H1 (cell line): ENCODE measurements at regions of chr7 and their contacts with region 1.

Region 1: DNA sequence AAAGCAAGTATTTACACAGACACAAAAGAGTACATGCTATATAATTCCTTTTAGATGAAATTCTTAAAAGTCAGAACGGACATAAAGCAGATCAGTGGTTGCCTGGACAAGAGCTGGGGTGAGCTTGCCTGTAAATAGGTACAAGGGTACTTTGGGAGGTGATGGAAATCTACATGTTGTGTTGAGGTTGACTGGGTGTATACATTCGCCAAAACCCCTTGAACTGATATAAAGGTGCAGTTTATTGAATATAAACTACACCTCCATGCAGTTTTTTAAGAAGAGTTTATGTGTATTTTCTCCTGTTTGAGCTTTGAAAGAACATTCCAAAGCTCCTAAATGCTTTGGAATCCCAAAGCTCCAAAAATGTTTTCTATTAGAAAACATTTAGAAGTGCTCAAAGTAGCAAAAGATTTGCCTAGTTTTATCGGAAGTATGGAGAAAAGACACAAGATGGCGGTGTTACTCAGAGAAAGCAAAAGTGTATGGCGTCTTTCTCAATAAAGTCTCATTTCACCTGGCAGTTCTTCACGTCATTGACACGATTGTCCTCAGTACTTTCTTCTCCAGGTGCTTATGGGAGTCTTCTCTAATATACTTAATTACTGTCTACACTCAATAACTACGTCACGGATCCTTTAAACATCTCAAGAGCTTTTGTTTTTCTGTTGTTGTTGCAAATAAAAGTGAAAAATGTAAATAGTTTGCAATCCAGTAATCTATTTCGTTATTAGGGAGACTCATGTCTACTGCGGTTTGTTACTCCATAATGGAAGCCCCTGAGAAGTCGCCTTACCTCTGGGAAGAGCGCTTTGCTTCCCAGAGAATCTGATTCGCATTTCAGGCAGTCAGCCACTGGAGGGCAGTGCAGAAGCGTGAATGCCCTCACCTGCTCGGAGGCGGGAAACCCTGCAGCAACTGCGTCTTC is 14.7 kb upstream of the SEC61G start:
- DNase-seq: peak; percentile 81 to 91
- H3K4me3 ChIP-seq: peak overlapping the region in 1 of 4 experiments; percentile 7; a peak in 1 of 8 replicates
- H3K27ac ChIP-seq: no peak overlapping the region
- H3K4me1 ChIP-seq: no peaks in the 10 kb centered on the region
- H3K27me3 ChIP-seq: no peaks in the 10 kb centered on the region
- CTCF ChIP-seq: peak; percentile 85 to 94 (median 89)
- EP300 ChIP-seq: no peak
- POLR2A ChIP-seq: no peak
- RAD21 ChIP-seq: peak; percentile 97 to 98

Region 2: DNA sequence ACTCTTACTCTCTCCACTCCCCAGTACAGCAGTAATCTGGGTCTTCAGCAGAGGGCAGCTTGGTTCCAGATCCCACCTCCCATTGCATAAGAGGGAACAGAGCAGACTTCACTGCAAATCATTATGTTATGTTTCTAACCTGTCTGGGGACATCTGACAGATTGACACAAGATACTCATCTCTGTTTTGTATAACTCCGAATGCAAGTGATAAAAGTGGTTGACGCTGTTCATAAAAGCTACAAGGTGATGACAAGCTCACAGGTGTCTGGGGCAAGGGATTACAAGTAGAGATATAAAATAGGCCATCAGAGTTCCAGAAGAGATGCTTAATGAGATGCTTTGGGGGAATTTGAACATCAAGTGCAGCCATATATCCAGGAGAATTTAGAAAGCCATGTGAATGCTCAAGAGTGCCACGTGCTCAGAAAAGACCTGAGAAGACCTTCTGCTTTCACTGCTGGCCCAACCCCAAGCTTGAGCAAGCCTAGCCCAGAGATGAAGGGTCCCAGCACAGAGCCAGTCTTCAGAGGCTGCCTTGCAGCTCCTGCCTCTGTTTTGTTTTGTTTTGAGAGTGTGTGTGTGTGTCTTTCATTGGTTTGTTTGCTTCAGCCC is 150.9 kb before region 1 on chr7:
- CTCF ChIA-PET with region 1: no interaction called
- POLR2A ChIA-PET with region 1: no interaction called
- DNase-seq: no peak
- H3K4me3 ChIP-seq: no peak overlapping the region
- H3K27ac ChIP-seq: no peak overlapping the region
- H3K4me1 ChIP-seq: no peaks in the 10 kb centered on the region
- H3K27me3 ChIP-seq: no peaks in the 10 kb centered on the region
- CTCF ChIP-seq: no peak
- EP300 ChIP-seq: no peak
- POLR2A ChIP-seq: no peak
- RAD21 ChIP-seq: peak in 1 of 2 experiments; percentile 12; a peak in 2 of 4 replicates

Region 3: DNA sequence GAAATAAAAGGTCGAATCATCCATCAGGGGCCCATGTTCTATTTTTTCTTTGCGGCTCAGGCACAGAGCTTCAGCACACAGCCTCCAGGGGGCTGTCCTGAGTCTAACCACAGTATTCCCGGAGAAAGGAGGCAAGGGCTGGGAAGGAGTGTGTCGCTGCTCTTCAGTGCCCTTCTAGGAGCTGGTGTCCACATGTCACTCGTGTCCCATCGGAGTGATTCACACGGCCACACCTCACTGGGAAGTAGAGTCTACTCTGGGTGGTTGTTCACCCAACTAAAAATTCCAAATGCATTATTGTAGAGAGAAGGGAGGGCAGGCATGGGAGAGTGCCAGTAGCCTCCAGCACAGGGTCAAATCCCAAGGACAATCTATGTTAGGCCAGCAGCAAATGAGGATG is 476.6 kb after region 1 on chr7:
- CTCF ChIA-PET with region 1: interaction called, 41 read pairs
- POLR2A ChIA-PET with region 1: no interaction called
- DNase-seq: peak in 1 of 2 experiments; percentile 76
- H3K4me3 ChIP-seq: no peak overlapping the region; a peak in 1 of 8 replicates
- H3K27ac ChIP-seq: no peak overlapping the region
- H3K4me1 ChIP-seq: peaks cover 0 to 4% (median 2%) of the 10 kb centered on the region in 4 experiments; a peak in 3 of 7 replicates
- H3K27me3 ChIP-seq: peaks cover 11 to 26% (median 19%) of the 10 kb centered on the region in 4 experiments
- CTCF ChIP-seq: peak; percentile 68 to 81 (median 76)
- EP300 ChIP-seq: no peak
- POLR2A ChIP-seq: no peak
- RAD21 ChIP-seq: peak; percentile 49 to 57